CD8-positive, alpha-beta memory T cell (primary cell): ENCODE measurements at regions of chr9 and their contacts with region 1.

Region 1: GRCh38 chr9:127734747-127735529 is at the start of gene TOR2A:
- DNase-seq: peak; percentile 99
- H3K4me3 ChIP-seq: peak within 1 kb of the TSS; percentile 94
- H3K4me3 Mint-ChIP-seq: peak within 1 kb of the TSS; percentile 80 to 98 (median 94)
- H3K27ac ChIP-seq: peak within 1 kb of the TSS; percentile 62
- H3K27ac Mint-ChIP-seq: peak within 1 kb of the TSS; percentile 85 to 98 (median 96)
- H3K4me1 ChIP-seq: peaks cover 22% of the 10 kb centered on the region
- H3K4me1 Mint-ChIP-seq: peaks cover 14 to 25% (median 23%) of the 10 kb centered on the region in 3 donors
- H3K27me3 ChIP-seq: no peaks in the 10 kb centered on the region
- H3K27me3 Mint-ChIP-seq: no peaks in the 10 kb centered on the region
- total RNA-seq, gene TOR2A: 30.7 to 33.7 TPM

Region 2: GRCh38 chr9:127586537-127586936 is 148.4 kb before region 1 on chr9:
- CTCF ChIA-PET with region 1: interaction called, 32 read pairs
- POLR2A ChIA-PET with region 1: no interaction called
- DNase-seq: peak; percentile 32 to 76 (median 50)
- H3K4me3 ChIP-seq: no peak overlapping the region
- H3K4me3 Mint-ChIP-seq: no peak overlapping the region
- H3K27ac ChIP-seq: no peak overlapping the region
- H3K27ac Mint-ChIP-seq: no peak overlapping the region
- H3K4me1 ChIP-seq: no peaks in the 10 kb centered on the region
- H3K4me1 Mint-ChIP-seq: no peaks in the 10 kb centered on the region
- H3K27me3 ChIP-seq: no peaks in the 10 kb centered on the region
- H3K27me3 Mint-ChIP-seq: peaks cover 3 to 16% of the 10 kb centered on the region in 2 donors

Region 3: DNA sequence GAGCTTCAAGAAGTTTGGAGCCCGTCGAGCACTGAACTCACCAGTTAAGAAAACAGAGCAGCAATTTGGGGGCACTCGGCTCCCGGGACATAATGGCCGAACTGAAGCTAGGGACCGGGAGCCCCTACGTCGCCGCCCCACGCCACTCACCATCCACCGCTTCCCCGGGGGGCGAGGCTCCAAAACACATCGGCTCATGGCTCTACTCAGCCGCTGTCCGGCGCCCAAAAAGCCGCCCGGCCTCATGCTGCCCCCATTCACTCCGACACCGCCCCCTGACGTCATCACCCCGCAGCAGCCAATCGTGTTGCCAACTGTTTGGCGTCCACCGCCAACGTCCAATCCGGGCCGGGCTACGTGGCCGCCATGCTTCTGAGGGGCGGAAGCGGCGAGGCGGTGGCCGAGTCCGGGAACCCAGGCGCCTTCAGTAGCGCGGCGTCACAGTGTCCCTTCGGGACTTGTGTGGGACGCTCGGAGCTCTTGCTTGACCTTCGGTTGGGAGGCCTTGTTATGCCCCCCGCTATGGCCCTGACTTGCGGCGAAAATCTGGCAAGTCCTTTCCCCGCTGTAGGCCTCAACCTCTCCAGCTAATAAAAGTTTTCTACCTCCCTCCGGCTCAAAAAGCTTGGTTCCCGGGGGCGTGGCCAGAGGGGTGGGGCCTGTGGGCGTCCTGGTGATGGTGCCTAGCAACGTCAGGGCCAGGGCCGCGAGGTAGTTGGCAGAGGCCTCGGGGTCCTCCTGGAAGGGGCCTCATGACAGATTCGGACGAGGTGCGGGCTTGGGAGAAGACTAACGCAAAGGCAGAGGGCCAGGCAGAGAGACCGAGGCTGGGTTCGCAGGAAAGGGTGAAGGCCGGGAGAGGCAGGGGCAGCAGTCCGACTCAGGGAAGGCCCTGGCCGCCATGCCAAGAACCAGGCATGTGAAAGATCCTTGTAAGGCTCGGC is 19.3 kb before region 1 on chr9 and contains the starts of genes PTRH1 and TTC16:
- CTCF ChIA-PET with region 1: interaction called, 37 read pairs
- POLR2A ChIA-PET with region 1: interaction called, 6 read pairs
- DNase-seq: peak; percentile 94 to 98 (median 97)
- H3K4me3 ChIP-seq: peak within 1 kb of the TSS; percentile 91
- H3K4me3 Mint-ChIP-seq: peak within 1 kb of the TSS; percentile 85 to 99 (median 98)
- H3K27ac ChIP-seq: peak within 1 kb of the TSS; percentile 78
- H3K27ac Mint-ChIP-seq: peak within 1 kb of the TSS; percentile 63 to 99 (median 98)
- H3K4me1 ChIP-seq: peaks cover 41% of the 10 kb centered on the region
- H3K4me1 Mint-ChIP-seq: peaks cover 44 to 53% (median 44%) of the 10 kb centered on the region in 3 donors
- H3K27me3 ChIP-seq: no peaks in the 10 kb centered on the region
- H3K27me3 Mint-ChIP-seq: peaks cover 0 to 2% of the 10 kb centered on the region in 2 donors
- total RNA-seq, gene PTRH1: 34.4 to 35.9 TPM
- total RNA-seq, gene TTC16: 1.6 to 1.8 TPM

Region 4: GRCh38 chr9:127779136-127779981 is 44.4 kb after region 1 on chr9:
- CTCF ChIA-PET with region 1: interaction called, 34 read pairs
- POLR2A ChIA-PET with region 1: interaction called, 9 read pairs
- DNase-seq: peak in 4 of 5 donors; percentile 42 to 76 (median 53)
- H3K4me3 ChIP-seq: peak overlapping the region; percentile 57
- H3K4me3 Mint-ChIP-seq: peak overlapping the region; percentile 99 to 100 (median 100)
- H3K27ac ChIP-seq: peak overlapping the region; percentile 82
- H3K27ac Mint-ChIP-seq: peak overlapping the region; percentile 91 to 100 (median 98)
- H3K4me1 ChIP-seq: peaks cover 60% of the 10 kb centered on the region
- H3K4me1 Mint-ChIP-seq: peaks cover 56 to 82% (median 76%) of the 10 kb centered on the region in 3 donors
- H3K27me3 ChIP-seq: no peaks in the 10 kb centered on the region
- H3K27me3 Mint-ChIP-seq: no peaks in the 10 kb centered on the region

Region 5: GRCh38 chr9:127862075-127863011 is 127.4 kb after region 1 on chr9:
- CTCF ChIA-PET with region 1: interaction called, 20 read pairs
- POLR2A ChIA-PET with region 1: interaction called, 5 read pairs
- DNase-seq: peak; percentile 22 to 76 (median 48)
- H3K4me3 ChIP-seq: peak overlapping the region; percentile 11
- H3K4me3 Mint-ChIP-seq: peak overlapping the region in 6 of 7 donors; percentile 22 to 86 (median 55)
- H3K27ac ChIP-seq: peak overlapping the region; percentile 66
- H3K27ac Mint-ChIP-seq: peak overlapping the region; percentile 90 to 98 (median 96)
- H3K4me1 ChIP-seq: peaks cover 47% of the 10 kb centered on the region
- H3K4me1 Mint-ChIP-seq: peaks cover 39 to 58% (median 45%) of the 10 kb centered on the region in 3 donors
- H3K27me3 ChIP-seq: no peaks in the 10 kb centered on the region
- H3K27me3 Mint-ChIP-seq: no peaks in the 10 kb centered on the region

Region 6: GRCh38 chr9:128026773-128027541 is 292.0 kb after region 1 on chr9:
- CTCF ChIA-PET with region 1: no interaction called
- POLR2A ChIA-PET with region 1: no interaction called
- DNase-seq: peak; percentile 31 to 74 (median 66)
- H3K4me3 ChIP-seq: peak overlapping the region; percentile 60
- H3K4me3 Mint-ChIP-seq: peak overlapping the region; percentile 72 to 90 (median 80)
- H3K27ac ChIP-seq: peak overlapping the region; percentile 84
- H3K27ac Mint-ChIP-seq: peak overlapping the region; percentile 96 to 99 (median 98)
- H3K4me1 ChIP-seq: peaks cover 93% of the 10 kb centered on the region
- H3K4me1 Mint-ChIP-seq: peaks cover 84 to 96% (median 89%) of the 10 kb centered on the region in 3 donors
- H3K27me3 ChIP-seq: no peaks in the 10 kb centered on the region
- H3K27me3 Mint-ChIP-seq: no peaks in the 10 kb centered on the region

Region 7: GRCh38 chr9:128396970-128397613 is 662.2 kb after region 1 on chr9:
- CTCF ChIA-PET with region 1: no interaction called
- POLR2A ChIA-PET with region 1: no interaction called
- DNase-seq: no peak
- H3K4me3 ChIP-seq: no peak overlapping the region
- H3K4me3 Mint-ChIP-seq: no peak overlapping the region
- H3K27ac ChIP-seq: no peak overlapping the region
- H3K27ac Mint-ChIP-seq: peak overlapping the region in 4 of 8 donors; percentile 3 to 47 (median 33)
- H3K4me1 ChIP-seq: no peaks in the 10 kb centered on the region
- H3K4me1 Mint-ChIP-seq: peaks cover 0 to 6% (median 2%) of the 10 kb centered on the region in 3 donors
- H3K27me3 ChIP-seq: no peaks in the 10 kb centered on the region
- H3K27me3 Mint-ChIP-seq: peaks cover 0 to 3% of the 10 kb centered on the region in 2 donors